Prostate gland (tissue), 2 donors: ENCODE measurements at regions of chr7 and their contacts with region 1.

Region 1: DNA sequence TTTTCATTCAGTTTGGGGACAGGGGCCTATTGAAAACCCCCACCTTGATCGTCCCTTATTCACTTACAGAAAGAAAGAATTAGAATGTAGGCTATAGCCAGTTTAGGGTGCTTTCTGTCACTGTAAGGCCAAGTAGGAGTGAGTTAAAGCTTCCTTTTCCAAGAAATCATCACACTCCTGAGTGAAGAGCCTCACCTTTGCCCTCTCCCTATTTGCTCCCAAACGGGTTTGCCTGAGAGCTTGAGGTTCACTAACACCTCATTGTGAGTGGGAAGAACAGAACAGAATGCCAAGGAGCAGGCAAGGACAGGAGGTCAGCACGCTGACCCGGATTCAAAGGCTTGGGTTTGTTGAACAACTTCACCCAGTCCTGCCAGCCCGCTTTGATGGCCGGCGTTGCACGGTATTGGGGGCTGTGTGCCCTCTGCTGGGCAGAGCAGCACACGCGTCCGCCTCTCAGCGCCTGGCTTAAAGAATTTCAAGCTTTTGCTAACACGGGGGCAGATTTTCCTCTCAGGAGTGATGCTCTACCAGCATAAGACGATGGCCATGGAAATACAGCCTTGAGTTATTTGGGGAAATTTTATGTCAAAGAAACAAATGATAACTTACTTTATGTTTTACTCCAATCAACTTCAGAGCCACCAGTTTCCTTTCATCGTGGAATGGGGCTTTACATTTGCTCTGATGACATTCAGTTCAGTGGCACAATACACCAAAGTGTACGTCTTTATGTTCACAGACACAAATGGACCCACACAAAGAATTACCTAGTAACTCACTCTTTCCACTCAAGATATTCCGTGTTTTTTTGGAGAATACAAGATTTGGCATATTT is 470.0 kb downstream of the SUGCT start:
- DNase-seq: no peak
- H3K4me3 ChIP-seq: no peak overlapping the region
- H3K27ac ChIP-seq: no peak overlapping the region
- H3K4me1 ChIP-seq: no peaks in the 10 kb centered on the region
- H3K27me3 ChIP-seq: no peaks in the 10 kb centered on the region
- CTCF ChIP-seq: peak in 2 of 4 experiments; percentile 33 to 43
- POLR2A ChIP-seq: no peak

Region 2: DNA sequence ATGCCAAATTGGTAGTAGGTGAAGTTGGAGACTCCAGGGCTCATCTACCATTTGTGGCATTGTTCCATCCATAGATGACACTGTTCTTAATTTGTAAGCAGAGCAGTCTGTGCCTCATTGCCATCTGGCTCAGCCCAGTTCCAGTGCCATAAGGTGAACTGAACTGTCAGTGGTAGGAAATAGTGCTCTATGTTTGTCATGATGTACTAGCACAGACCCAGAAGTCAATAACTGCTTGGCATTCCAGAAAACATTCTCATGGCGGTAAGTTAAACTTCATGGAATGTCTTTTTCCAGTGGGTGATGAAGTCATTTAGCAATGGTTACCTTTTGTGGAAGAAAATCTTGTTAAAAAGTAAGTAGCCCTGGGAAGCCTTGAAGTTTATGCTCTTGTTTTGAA is 167.3 kb before region 1 on chr7:
- intact Hi-C with region 1: loop called (anchors 10 kb)
- DNase-seq: no peak
- H3K4me3 ChIP-seq: no peak overlapping the region
- H3K27ac ChIP-seq: no peak overlapping the region
- H3K4me1 ChIP-seq: no peaks in the 10 kb centered on the region
- H3K27me3 ChIP-seq: no peaks in the 10 kb centered on the region
- CTCF ChIP-seq: no peak
- POLR2A ChIP-seq: no peak